ENCODE measurements at regions of chr9 and their contacts with region 1.

Region 1: DNA sequence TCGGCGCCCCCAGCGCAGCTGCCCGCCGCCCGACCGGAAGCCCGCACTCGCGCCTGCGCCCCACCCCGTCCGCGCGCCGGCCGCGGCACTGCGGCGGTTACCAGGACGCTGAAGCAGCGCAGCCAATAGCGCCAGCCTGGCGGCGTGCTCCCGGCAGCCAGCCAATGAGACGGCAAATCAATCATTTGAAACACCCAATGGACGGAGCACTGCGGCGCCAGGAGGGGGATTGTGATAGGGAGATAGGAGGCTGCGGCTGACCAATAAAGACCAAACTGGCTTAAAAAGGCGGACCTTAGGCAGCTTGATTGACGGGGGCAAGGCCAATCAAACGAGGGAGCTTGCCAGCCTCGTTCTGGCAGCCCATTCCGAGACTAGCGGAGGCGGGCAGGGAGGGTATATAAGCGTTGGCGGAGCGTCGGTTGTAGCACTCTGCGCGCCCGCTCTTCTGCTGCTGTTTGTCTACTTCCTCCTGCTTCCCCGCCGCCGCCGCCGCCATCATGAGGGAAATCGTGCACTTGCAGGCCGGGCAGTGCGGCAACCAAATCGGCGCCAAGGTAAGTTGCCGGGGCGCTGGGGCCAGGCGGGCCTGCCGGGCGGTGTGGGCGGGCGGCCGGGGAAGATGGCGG is at the start of gene TUBB4B:
- DNase-seq: peak; percentile 98
- ATAC-seq: peak; percentile 80
- H3K4me3 Mint-ChIP-seq: peak within 1 kb of the TSS; percentile 81
- H3K27ac Mint-ChIP-seq: peak within 1 kb of the TSS; percentile 87; the same call in 1 of the 2 replicates
- H3K4me1 Mint-ChIP-seq: peaks cover 39% of the 10 kb centered on the region
- H3K27me3 Mint-ChIP-seq: no peaks in the 10 kb centered on the region
- CTCF ChIP-seq: no peak
- total RNA-seq, gene TUBB4B: 373 to 376 TPM (median 375 TPM) in 3 replicates

Region 2: DNA sequence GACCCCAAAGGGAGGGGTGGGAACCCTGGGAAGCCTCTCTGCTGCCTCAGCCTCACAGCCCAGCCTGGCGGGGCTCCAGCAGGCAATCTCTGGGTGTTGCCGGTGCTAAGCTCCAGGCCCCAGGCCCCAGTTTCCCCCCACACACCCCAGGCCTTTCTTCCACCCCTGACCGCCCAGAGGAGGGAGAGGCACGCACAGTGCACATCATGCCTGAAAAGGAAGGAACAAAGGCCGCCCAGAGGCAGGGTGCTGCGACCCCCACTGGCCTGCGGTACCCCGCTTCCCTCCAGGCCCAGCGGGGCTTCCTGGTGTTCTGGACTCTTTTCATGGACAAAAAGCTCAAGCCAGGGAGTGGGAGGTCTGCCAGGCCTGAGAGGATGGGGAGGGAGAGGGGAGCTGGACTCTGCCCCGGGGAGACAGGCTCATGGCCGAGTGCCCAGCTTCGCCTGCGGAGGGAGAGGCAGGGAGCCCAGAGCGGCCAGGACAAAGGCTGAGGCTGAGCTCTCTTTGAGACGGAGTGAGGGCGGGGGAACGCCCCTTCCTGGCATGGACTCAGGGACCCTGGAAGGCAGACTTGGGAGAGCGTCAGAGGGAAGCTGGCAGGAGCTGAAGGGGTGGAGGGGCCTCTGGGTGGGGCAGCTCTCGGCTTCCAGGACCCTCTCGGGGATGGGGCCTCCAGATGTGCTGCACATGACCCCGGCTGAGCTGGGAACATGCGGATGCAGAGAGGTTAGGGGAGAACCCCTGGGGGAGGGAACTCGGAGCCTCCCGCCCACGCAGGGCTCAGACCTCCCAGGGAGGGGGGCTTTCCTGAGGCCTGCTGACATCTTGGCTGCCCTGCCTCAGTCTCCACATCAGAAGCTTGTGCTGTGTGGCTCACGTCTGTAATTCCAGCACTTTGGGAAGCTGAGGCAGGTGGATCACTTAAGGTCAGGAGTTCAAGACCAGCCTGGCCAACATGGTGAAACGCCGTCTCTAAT is 185.3 kb before region 1 on chr9:
- CTCF ChIA-PET with region 1: interaction called, 10 read pairs
- POLR2A ChIA-PET with region 1: interaction called, 3 read pairs
- DNase-seq: no peak
- ATAC-seq: no peak
- H3K4me3 Mint-ChIP-seq: no peak overlapping the region
- H3K27ac Mint-ChIP-seq: no peak overlapping the region
- H3K4me1 Mint-ChIP-seq: 0 out of 2 replicates have a peak, but pooled peaks cover 2% of the 10 kb centered on the region
- H3K27me3 Mint-ChIP-seq: peaks cover 24% of the 10 kb centered on the region
- CTCF ChIP-seq: no peak

Region 3: GRCh38 chr9:137129456-137130175 is 111.4 kb before region 1 on chr9:
- CTCF ChIA-PET with region 1: interaction called, 27 read pairs
- POLR2A ChIA-PET with region 1: interaction called, 5 read pairs
- DNase-seq: peak; percentile 87
- ATAC-seq: peak; percentile 96
- H3K4me3 Mint-ChIP-seq: peak overlapping the region; percentile 78
- H3K27ac Mint-ChIP-seq: no peak overlapping the region
- H3K4me1 Mint-ChIP-seq: peaks cover 14% of the 10 kb centered on the region
- H3K27me3 Mint-ChIP-seq: peaks cover 23% of the 10 kb centered on the region
- CTCF ChIP-seq: no peak

Region 4: DNA sequence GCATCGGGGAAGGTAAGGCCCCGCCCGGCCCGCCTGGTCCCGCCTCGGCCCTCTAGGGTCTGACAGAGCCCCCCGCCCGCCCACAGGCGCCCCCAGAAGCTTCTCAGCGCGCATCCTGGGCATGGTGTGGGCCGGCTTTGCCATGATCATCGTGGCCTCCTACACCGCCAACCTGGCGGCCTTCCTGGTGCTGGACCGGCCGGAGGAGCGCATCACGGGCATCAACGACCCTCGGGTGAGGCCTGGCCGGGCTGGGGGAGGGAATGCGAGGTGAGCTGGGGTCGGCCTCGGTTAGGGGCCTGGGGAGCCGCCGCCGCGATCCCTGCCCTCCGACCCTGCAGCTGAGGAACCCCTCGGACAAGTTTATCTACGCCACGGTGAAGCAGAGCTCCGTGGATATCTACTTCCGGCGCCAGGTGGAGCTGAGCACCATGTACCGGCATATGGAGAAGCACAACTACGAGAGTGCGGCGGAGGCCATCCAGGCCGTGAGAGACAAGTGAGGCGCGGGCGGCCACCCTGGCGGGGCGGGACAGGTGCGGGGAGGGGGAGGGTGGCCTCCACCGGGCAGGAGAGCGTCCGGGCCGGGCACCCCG is 78.4 kb before region 1 on chr9:
- CTCF ChIA-PET with region 1: interaction called, 18 read pairs
- POLR2A ChIA-PET with region 1: interaction called, 3 read pairs
- DNase-seq: peak; percentile 54
- ATAC-seq: peak; percentile 12
- H3K4me3 Mint-ChIP-seq: peak overlapping the region; percentile 60
- H3K27ac Mint-ChIP-seq: no peak overlapping the region
- H3K4me1 Mint-ChIP-seq: no peaks in the 10 kb centered on the region
- H3K27me3 Mint-ChIP-seq: peaks cover 85% of the 10 kb centered on the region
- CTCF ChIP-seq: no peak

Region 5: DNA sequence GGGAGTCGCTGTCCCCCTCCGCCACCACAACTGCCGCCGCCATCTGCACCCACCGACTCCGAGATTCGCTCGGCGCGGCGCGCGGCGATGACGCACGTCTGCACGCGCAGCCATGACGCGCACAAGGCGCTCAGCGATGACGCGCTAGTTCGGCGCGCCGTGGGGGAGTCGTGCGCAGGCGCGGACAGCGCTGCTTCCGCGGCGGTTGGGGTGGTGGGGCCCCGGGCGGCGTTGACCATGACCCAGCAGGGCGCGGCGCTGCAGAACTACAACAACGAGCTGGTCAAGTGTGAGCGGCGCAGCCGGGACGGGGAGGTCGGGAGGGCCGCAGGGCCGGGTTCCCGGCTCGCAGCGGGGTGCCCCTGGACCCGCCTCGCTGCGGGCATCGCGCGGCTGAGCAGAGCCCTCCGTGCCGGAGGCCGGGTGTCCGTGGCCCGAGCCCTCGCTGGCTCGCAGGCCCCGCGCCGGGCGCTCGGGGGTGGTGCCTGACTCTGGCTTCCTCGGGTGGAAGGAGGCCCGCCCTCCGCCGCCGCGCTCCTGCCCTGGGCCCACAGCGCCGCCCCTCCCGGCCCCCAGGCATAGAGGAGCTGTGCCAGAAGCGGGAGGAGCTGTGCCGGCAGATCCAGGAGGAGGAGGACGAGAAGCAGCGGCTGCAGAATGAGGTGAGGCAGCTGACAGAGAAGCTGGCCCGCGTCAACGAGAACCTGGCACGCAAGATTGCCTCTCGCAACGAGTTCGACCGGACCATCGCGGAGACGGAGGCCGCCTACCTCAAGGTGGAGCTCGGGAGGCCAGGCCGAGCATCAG is 52.3 kb before region 1 on chr9 and contains the starts of genes ANAPC2 and SSNA1:
- CTCF ChIA-PET with region 1: interaction called, 22 read pairs
- POLR2A ChIA-PET with region 1: interaction called, 5 read pairs
- DNase-seq: peak; percentile 92
- ATAC-seq: peak; percentile 84
- H3K4me3 Mint-ChIP-seq: peak within 1 kb of the TSS; percentile 92
- H3K27ac Mint-ChIP-seq: peak within 1 kb of the TSS; percentile 94
- H3K4me1 Mint-ChIP-seq: peaks cover 20% of the 10 kb centered on the region
- H3K27me3 Mint-ChIP-seq: no peaks in the 10 kb centered on the region; the same call in 1 of the 2 replicates
- CTCF ChIP-seq: no peak
- total RNA-seq, gene ANAPC2: 61.0 to 80.9 TPM (median 61.2 TPM) in 3 replicates
- total RNA-seq, gene SSNA1: 102 to 105 TPM (median 103 TPM) in 3 replicates

Region 6: GRCh38 chr9:137223078-137223970 is 17.7 kb before region 1 on chr9:
- CTCF ChIA-PET with region 1: interaction called, 143 read pairs
- POLR2A ChIA-PET with region 1: interaction called, 5 read pairs
- DNase-seq: peak; percentile 97
- ATAC-seq: peak; percentile 73
- H3K4me3 Mint-ChIP-seq: peak overlapping the region; percentile 77
- H3K27ac Mint-ChIP-seq: no peak overlapping the region
- H3K4me1 Mint-ChIP-seq: peaks cover 3% of the 10 kb centered on the region
- H3K27me3 Mint-ChIP-seq: no peaks in the 10 kb centered on the region
- CTCF ChIP-seq: no peak

Region 7: DNA sequence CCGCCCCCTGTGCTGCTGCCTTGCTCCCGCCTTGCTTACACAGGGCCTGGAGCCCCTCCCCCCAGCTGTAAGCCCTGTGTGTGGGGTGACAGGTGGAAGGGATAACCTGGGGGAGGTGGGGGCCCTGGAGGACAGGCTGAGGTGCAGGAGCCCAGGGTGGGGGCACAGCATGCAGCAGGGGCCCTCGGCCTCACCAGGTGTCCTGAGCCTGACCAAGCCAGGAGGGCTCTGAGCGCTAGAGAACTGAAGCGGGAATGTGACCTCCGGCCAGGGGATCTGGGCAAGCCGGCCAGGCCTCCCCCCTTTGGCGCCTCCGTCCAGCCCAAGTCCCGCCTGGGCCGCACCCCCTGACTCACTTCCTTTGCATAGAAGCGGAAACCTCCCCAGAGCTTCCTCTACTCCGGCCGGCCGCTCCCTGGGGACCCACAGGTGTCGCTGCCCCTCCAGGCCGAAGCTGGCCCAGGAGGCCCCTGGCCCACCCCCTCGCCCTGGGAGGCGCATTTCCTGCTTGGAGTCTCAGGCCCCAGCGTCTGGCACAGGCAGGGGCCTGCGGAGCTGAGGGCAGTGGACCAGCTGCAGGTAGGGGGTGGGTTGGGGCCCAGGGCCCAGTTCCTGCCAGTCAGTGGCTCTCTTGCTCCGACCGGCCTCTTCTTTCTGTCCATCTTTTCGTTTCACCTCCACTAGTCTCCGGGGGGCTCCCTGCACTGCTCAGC is 36.5 kb after region 1 on chr9 and contains the start of gene TOR4A:
- CTCF ChIA-PET with region 1: interaction called, 30 read pairs
- POLR2A ChIA-PET with region 1: interaction called, 12 read pairs
- DNase-seq: peak; percentile 76
- ATAC-seq: peak; percentile 36
- H3K4me3 Mint-ChIP-seq: peak within 1 kb of the TSS; percentile 62
- H3K27ac Mint-ChIP-seq: peak within 1 kb of the TSS; percentile 90
- H3K4me1 Mint-ChIP-seq: peaks cover 25% of the 10 kb centered on the region
- H3K27me3 Mint-ChIP-seq: peaks cover 8% of the 10 kb centered on the region
- CTCF ChIP-seq: no peak
- total RNA-seq, gene TOR4A: 7.3 to 11.8 TPM (median 11.3 TPM) in 3 replicates

Region 8: GRCh38 chr9:137365056-137365455 is 124.1 kb after region 1 on chr9:
- CTCF ChIA-PET with region 1: no interaction called
- POLR2A ChIA-PET with region 1: no interaction called
- DNase-seq: peak; percentile 2
- ATAC-seq: no peak
- H3K4me3 Mint-ChIP-seq: no peak overlapping the region
- H3K27ac Mint-ChIP-seq: no peak overlapping the region
- H3K4me1 Mint-ChIP-seq: no peaks in the 10 kb centered on the region
- H3K27me3 Mint-ChIP-seq: peaks cover 7% of the 10 kb centered on the region; the same call in 1 of the 2 replicates
- CTCF ChIP-seq: no peak

Region 9: GRCh38 chr9:137804908-137805630 is 564.1 kb after region 1 on chr9:
- CTCF ChIA-PET with region 1: no interaction called
- POLR2A ChIA-PET with region 1: no interaction called
- DNase-seq: no peak
- ATAC-seq: no peak
- H3K4me3 Mint-ChIP-seq: no peak overlapping the region
- H3K27ac Mint-ChIP-seq: peak overlapping the region; percentile 53
- H3K4me1 Mint-ChIP-seq: no peaks in the 10 kb centered on the region
- H3K27me3 Mint-ChIP-seq: no peaks in the 10 kb centered on the region
- CTCF ChIP-seq: no peak

Measured in WTC11 (cell line).